MCF 10A (cell line): ENCODE measurements at regions of chr15 and their contacts with region 1.

Region 1: DNA sequence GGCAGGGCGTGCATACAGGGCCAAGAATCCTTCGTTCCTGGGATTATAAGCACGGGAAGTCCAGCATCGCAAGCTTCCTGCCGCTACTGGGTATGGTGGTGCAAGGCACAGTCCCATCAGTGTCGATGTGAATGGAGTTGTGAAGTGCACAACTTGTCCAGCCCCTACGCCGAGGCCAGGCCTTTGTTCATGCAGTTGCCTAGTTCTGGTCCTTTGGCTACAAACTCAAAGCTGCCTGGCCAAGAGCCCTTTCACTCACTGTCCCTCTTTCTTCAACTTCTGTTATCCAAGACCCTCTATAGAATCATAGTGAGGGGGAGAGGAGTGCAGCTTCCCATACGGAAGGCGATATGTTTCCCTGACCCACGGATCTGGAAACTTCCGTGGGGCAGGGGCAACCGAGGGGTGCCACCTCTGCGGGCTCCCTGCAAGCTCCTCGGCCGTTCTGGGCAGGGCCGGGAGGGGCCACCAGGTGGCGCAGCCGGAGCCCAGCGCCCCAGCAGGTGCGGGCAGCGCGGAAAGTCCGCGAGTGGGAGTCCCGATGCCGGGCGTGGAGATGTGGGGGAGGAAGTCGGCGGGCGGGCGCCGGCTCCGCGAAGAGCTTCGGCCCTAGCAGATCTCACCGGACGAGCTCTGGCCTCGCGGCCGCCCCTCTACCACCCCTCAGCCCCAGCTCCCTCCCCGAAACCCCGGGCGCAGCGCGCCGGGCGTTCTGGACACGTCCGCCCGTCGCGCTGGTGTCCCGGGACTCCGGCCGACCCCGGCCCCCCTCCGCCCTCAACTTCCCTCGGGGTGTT is 693 bp downstream of the RASGRP1 start:
- DNase-seq: peak; percentile 50
- H3K4me3 Mint-ChIP-seq: peak overlapping the region; percentile 60
- H3K27ac Mint-ChIP-seq: no peak overlapping the region
- H3K4me1 Mint-ChIP-seq: no peaks in the 10 kb centered on the region
- H3K27me3 Mint-ChIP-seq: peaks cover 11% of the 10 kb centered on the region
- CTCF ChIP-seq: peak; percentile 71

Region 2: GRCh38 chr15:37995461-37996347 is 568.2 kb before region 1 on chr15:
- CTCF ChIA-PET with region 1: interaction called, 3 read pairs
- POLR2A ChIA-PET with region 1: no interaction called
- intact Hi-C with region 1: loop called (anchors 5 kb)
- DNase-seq: peak; percentile 82
- H3K4me3 Mint-ChIP-seq: no peak overlapping the region
- H3K27ac Mint-ChIP-seq: no peak overlapping the region
- H3K4me1 Mint-ChIP-seq: peaks cover 13% of the 10 kb centered on the region
- H3K27me3 Mint-ChIP-seq: peaks cover 26% of the 10 kb centered on the region
- CTCF ChIP-seq: peak; percentile 73

Region 3: GRCh38 chr15:38226608-38227266 is 337.2 kb before region 1 on chr15:
- CTCF ChIA-PET with region 1: no interaction called
- POLR2A ChIA-PET with region 1: no interaction called
- intact Hi-C with region 1: no loop called
- DNase-seq: peak; percentile 95
- H3K4me3 Mint-ChIP-seq: no peak overlapping the region
- H3K27ac Mint-ChIP-seq: no peak overlapping the region
- H3K4me1 Mint-ChIP-seq: peaks cover 6% of the 10 kb centered on the region
- H3K27me3 Mint-ChIP-seq: no peaks in the 10 kb centered on the region
- CTCF ChIP-seq: no peak

Region 4: GRCh38 chr15:38474155-38474757 is 89.7 kb before region 1 on chr15:
- CTCF ChIA-PET with region 1: interaction called, 7 read pairs
- POLR2A ChIA-PET with region 1: no interaction called
- intact Hi-C with region 1: loop called (anchors 5 kb)
- DNase-seq: peak; percentile 61
- H3K4me3 Mint-ChIP-seq: no peak overlapping the region
- H3K27ac Mint-ChIP-seq: no peak overlapping the region
- H3K4me1 Mint-ChIP-seq: peaks cover 6% of the 10 kb centered on the region
- H3K27me3 Mint-ChIP-seq: no peaks in the 10 kb centered on the region
- CTCF ChIP-seq: peak; percentile 63

Region 5: DNA sequence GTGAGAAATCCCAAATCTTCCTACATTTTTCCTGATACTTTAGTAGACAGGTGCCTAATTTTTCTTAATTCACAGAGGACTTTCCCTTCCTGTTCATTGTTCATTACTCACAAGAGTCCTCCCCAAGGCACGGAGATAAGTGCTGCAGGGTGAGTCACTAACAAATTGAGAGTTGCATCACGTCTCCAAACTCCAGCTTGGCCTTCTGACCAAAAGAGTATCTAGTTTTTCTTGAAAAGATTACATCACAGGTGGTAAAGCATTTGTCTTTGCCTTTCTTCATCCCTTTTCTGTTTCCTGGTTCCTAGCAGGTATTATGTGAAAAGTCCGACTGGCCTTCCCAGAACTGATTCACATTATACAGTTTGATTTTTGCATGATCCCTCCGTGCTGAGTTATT is 25.6 kb after region 1 on chr15:
- CTCF ChIA-PET with region 1: interaction called, 23 read pairs
- POLR2A ChIA-PET with region 1: no interaction called
- intact Hi-C with region 1: no loop called
- DNase-seq: peak; percentile 93
- H3K4me3 Mint-ChIP-seq: no peak overlapping the region
- H3K27ac Mint-ChIP-seq: no peak overlapping the region
- H3K4me1 Mint-ChIP-seq: peaks cover 20% of the 10 kb centered on the region
- H3K27me3 Mint-ChIP-seq: no peaks in the 10 kb centered on the region
- CTCF ChIP-seq: no peak

Region 6: GRCh38 chr15:38647683-38648082 is 83.8 kb after region 1 on chr15:
- CTCF ChIA-PET with region 1: interaction called, 87 read pairs
- POLR2A ChIA-PET with region 1: no interaction called
- intact Hi-C with region 1: loop called (anchors 1 kb)
- DNase-seq: peak; percentile 58
- H3K4me3 Mint-ChIP-seq: no peak overlapping the region
- H3K27ac Mint-ChIP-seq: no peak overlapping the region
- H3K4me1 Mint-ChIP-seq: no peaks in the 10 kb centered on the region
- H3K27me3 Mint-ChIP-seq: no peaks in the 10 kb centered on the region
- CTCF ChIP-seq: peak; percentile 61

Region 7: DNA sequence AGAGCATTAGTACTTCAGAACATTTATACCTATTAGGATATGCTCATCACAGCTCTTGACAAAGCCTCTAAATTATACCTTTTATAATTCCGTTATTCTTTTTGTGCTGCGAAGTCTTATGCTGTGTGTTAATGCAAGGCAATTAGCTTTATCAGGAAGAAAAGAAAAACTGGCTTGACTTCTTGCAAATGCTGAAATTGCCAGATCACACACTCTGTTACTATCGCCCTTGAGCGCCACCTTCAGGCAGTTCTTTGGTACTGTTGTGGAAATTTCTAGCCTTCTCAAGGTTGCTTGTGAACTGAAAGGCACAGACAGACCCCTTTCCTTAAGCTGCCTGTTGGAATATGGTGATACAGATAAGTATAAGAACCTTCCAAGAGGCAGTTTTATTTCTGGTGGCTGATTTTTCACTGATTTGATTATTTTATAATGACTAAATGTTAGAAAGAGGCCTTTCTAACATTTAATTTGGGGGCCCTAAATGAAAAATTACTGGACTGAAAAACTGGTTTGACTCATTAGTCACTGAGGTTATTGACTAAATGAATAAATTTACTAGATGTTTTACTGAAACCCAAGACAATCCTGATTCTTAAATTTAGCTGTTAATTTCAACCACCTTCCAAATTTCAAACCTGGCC is 126.9 kb after region 1 on chr15:
- CTCF ChIA-PET with region 1: interaction called, 17 read pairs
- POLR2A ChIA-PET with region 1: no interaction called
- intact Hi-C with region 1: no loop called
- DNase-seq: peak; percentile 81
- H3K4me3 Mint-ChIP-seq: no peak overlapping the region
- H3K27ac Mint-ChIP-seq: no peak overlapping the region
- H3K4me1 Mint-ChIP-seq: peaks cover 6% of the 10 kb centered on the region
- H3K27me3 Mint-ChIP-seq: no peaks in the 10 kb centered on the region
- CTCF ChIP-seq: peak; percentile 78

Region 8: DNA sequence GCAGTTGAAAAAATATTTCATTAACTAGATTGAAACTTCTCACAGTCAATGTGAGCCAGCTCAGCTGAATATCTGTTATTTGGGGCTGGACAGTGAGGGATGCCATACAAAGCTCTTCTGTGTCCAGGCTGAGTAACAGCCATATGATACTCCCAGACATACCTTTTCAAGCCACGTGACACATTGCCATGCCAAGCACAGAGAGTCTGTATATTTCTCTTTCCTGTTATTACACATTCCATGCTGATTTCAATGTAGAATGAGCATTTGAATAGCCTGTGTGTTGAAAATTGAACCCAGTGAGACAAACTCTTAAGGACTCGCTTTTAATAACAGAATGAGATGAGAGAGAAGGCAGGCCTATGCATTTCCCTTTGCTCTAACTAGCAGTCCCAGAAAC is 335.4 kb after region 1 on chr15:
- CTCF ChIA-PET with region 1: no interaction called
- POLR2A ChIA-PET with region 1: no interaction called
- intact Hi-C with region 1: no loop called
- DNase-seq: peak; percentile 45
- H3K4me3 Mint-ChIP-seq: no peak overlapping the region
- H3K27ac Mint-ChIP-seq: no peak overlapping the region
- H3K4me1 Mint-ChIP-seq: peaks cover 13% of the 10 kb centered on the region
- H3K27me3 Mint-ChIP-seq: no peaks in the 10 kb centered on the region
- CTCF ChIP-seq: no peak